Caco-2 (cell line): ENCODE measurements at regions of chr19 and their contacts with region 1.

Region 1: DNA sequence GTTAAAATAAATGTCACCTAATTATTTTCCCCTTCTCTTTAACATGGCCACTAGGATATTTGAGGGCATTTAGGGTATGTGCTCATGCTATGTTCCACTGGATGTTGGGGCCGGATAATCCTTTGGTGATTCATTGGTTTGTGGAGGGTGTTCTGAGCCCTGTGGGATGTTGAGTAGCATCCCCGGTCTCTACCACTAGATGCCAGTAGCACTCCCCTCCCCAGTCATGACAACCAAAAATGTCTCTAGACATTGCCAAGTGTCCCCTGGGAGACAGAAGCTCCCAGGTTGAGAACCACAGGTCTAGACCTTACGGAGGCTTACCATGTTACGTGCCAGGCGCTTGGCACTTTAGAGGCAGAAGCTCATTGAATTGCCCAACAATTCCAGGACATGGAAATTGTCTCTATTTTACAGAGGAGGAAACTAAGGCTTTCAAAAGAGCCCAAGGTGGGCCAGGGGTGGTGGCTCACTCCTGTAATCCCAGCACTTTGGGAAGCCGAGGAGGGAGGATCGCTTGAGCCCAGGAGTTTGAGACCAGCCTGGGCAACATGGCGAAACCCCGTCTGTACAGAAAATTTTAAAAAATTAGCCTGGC is 14.1 kb downstream of the SHANK1 start:
- DNase-seq: peak; percentile 61
- H3K4me3 ChIP-seq: no peak overlapping the region
- H3K4me3 Mint-ChIP-seq: no peak overlapping the region
- H3K27ac Mint-ChIP-seq: no peak overlapping the region
- H3K4me1 ChIP-seq: no peaks in the 10 kb centered on the region
- H3K4me1 Mint-ChIP-seq: peaks cover 7% of the 10 kb centered on the region
- H3K27me3 ChIP-seq: peaks cover 2% of the 10 kb centered on the region
- H3K27me3 Mint-ChIP-seq: peaks cover 24% of the 10 kb centered on the region
- CTCF ChIP-seq: peak; percentile 77 to 88

Region 2: GRCh38 chr19:50357178-50358100 is 348.1 kb before region 1 on chr19:
- CTCF ChIA-PET with region 1: interaction called, 6 read pairs
- POLR2A ChIA-PET with region 1: no interaction called
- intact Hi-C with region 1: loop called (anchors 10 kb)
- DNase-seq: peak; percentile 71 to 82
- H3K4me3 ChIP-seq: peak overlapping the region; percentile 36
- H3K4me3 Mint-ChIP-seq: peak overlapping the region; percentile 68
- H3K27ac Mint-ChIP-seq: no peak overlapping the region
- H3K4me1 ChIP-seq: no peaks in the 10 kb centered on the region
- H3K4me1 Mint-ChIP-seq: no peaks in the 10 kb centered on the region
- H3K27me3 ChIP-seq: no peaks in the 10 kb centered on the region
- H3K27me3 Mint-ChIP-seq: no peaks in the 10 kb centered on the region
- CTCF ChIP-seq: peak; percentile 83 to 94

Region 3: DNA sequence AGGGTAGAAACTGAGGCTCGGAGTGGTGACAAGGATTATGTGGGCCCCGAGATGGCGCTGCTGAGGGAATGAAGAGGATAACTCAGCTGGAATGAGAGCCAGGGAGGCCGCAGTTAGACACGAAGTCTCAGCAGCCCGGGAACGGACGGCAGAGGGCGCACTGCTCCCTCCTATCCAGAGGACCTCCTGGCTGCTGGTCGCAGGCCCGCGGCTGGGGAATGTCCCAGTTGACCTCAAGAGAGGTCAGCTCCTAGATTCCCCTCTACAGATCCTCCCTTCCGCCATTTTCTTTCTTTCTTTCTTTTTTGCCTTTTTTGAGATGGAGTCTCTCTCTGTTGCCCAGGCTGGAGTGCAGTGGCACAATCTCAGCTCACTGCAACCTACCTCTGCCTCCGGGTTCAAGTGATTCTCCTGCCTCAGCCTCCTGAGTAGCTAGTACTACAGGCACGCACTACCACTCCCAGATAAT is 167.7 kb before region 1 on chr19:
- CTCF ChIA-PET with region 1: interaction called, 3 read pairs
- POLR2A ChIA-PET with region 1: no interaction called
- intact Hi-C with region 1: loop called (anchors 10 kb)
- DNase-seq: peak; percentile 88 to 89
- H3K4me3 ChIP-seq: no peak overlapping the region
- H3K4me3 Mint-ChIP-seq: no peak overlapping the region
- H3K27ac Mint-ChIP-seq: no peak overlapping the region
- H3K4me1 ChIP-seq: no peaks in the 10 kb centered on the region
- H3K4me1 Mint-ChIP-seq: no peaks in the 10 kb centered on the region
- H3K27me3 ChIP-seq: no peaks in the 10 kb centered on the region
- H3K27me3 Mint-ChIP-seq: no peaks in the 10 kb centered on the region
- CTCF ChIP-seq: peak; percentile 84 to 87

Region 4: GRCh38 chr19:50724522-50725217 is 19.1 kb after region 1 on chr19:
- CTCF ChIA-PET with region 1: interaction called, 14 read pairs
- POLR2A ChIA-PET with region 1: no interaction called
- intact Hi-C with region 1: no loop called
- DNase-seq: peak; percentile 95 to 97
- H3K4me3 ChIP-seq: peak overlapping the region; percentile 68
- H3K4me3 Mint-ChIP-seq: peak overlapping the region; percentile 76
- H3K27ac Mint-ChIP-seq: peak overlapping the region; percentile 61
- H3K4me1 ChIP-seq: no peaks in the 10 kb centered on the region
- H3K4me1 Mint-ChIP-seq: peaks cover 10% of the 10 kb centered on the region
- H3K27me3 ChIP-seq: no peaks in the 10 kb centered on the region
- H3K27me3 Mint-ChIP-seq: peaks cover 20% of the 10 kb centered on the region
- CTCF ChIP-seq: peak; percentile 52 to 78

Region 5: GRCh38 chr19:50777754-50778303 is 72.3 kb after region 1 on chr19:
- CTCF ChIA-PET with region 1: interaction called, 13 read pairs
- POLR2A ChIA-PET with region 1: no interaction called
- intact Hi-C with region 1: loop called (anchors 1 kb)
- DNase-seq: no peak
- H3K4me3 ChIP-seq: no peak overlapping the region
- H3K4me3 Mint-ChIP-seq: no peak overlapping the region
- H3K27ac Mint-ChIP-seq: no peak overlapping the region
- H3K4me1 ChIP-seq: peaks cover 7% of the 10 kb centered on the region; the same call in 1 of the 2 replicates
- H3K4me1 Mint-ChIP-seq: no peaks in the 10 kb centered on the region
- H3K27me3 ChIP-seq: no peaks in the 10 kb centered on the region
- H3K27me3 Mint-ChIP-seq: peaks cover 30% of the 10 kb centered on the region
- CTCF ChIP-seq: no peak

Region 6: DNA sequence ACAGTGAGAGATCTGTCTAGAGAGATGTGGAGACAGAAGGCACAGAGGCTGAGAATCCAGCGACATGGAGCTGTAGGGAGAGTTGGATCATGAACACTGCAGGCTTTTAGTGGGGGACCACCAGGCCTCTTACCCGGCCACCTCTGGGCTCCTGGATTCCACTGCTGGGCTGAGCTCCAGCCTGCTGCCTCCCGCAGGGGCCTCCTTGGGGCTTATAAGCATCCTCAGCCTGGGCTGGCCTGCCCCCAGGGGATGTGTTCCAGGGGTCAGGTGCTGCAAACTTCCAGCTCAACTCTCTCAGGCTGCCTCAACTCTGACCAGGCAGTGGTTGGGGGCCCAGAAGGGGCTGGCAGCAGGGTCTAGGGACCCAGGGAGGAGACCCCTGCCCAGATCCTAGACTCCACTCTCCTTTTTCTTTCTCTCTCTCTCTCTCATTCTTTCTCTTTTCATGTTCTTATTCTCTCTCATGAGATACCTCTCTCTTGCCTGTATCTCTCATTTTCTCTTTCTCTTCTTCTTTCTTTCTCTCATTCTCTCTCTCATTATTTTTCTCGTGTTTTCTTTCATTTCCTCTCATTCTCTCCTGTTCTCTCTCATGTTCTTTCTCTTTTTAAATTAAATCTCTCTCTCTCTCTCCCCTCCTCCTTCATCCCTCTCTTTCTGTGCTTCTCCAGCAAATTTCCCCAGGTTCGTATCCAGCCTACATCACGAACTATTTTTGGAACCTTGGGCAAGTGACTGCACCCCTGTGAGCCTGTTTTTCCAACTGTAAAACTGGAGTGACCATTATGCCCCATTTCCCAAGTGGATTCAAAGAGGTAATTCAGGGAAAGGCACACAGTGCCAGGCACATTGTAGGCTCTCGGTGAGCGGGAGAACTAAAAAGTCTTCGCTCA is 205.9 kb after region 1 on chr19 and contains the start of gene KLK4:
- CTCF ChIA-PET with region 1: no interaction called
- POLR2A ChIA-PET with region 1: interaction called, 22 read pairs
- intact Hi-C with region 1: no loop called
- DNase-seq: no peak
- H3K4me3 ChIP-seq: no peak within 1 kb of the TSS
- H3K4me3 Mint-ChIP-seq: no peak within 1 kb of the TSS
- H3K27ac Mint-ChIP-seq: no peak within 1 kb of the TSS
- H3K4me1 ChIP-seq: no peaks in the 10 kb centered on the region
- H3K4me1 Mint-ChIP-seq: no peaks in the 10 kb centered on the region
- H3K27me3 ChIP-seq: no peaks in the 10 kb centered on the region
- H3K27me3 Mint-ChIP-seq: peaks cover 9% of the 10 kb centered on the region
- CTCF ChIP-seq: no peak
- total RNA-seq, gene KLK4: not detected in 2 replicates

Region 7: DNA sequence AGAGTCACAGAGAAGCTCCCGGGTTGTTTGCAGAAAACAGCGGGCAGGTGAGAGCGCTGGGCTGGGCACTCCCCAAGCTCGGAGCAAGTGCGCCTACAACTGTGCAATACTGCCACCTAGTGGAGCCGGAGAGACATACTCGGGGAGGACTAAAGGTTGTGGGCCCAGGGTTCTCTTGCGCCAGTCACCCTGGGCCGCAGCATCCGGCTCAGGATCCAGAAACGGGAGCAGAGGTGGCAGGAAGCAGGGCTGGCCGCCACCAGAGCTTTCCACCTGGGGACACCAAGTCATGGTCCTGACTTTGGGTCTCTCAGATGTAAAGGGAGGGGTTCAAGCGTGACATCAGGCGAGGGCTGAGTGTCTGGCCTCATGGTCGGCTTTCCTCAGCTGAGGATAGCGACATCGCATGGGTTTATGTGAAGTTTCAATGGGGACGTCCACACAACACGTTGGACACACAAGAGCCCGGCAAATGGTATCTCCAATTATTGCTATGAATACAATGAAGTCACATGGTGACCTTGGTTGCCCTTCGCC is 216.9 kb after region 1 on chr19:
- CTCF ChIA-PET with region 1: interaction called, 21 read pairs
- POLR2A ChIA-PET with region 1: no interaction called
- intact Hi-C with region 1: loop called (anchors 1 kb)
- DNase-seq: peak; percentile 80 to 86
- H3K4me3 ChIP-seq: no peak overlapping the region
- H3K4me3 Mint-ChIP-seq: no peak overlapping the region
- H3K27ac Mint-ChIP-seq: no peak overlapping the region
- H3K4me1 ChIP-seq: no peaks in the 10 kb centered on the region
- H3K4me1 Mint-ChIP-seq: no peaks in the 10 kb centered on the region
- H3K27me3 ChIP-seq: no peaks in the 10 kb centered on the region; the same call in 1 of the 2 replicates
- H3K27me3 Mint-ChIP-seq: peaks cover 17% of the 10 kb centered on the region
- CTCF ChIP-seq: peak; percentile 86 to 93